ENCODE measurements at regions of chr17 and their contacts with region 1.

Region 1: DNA sequence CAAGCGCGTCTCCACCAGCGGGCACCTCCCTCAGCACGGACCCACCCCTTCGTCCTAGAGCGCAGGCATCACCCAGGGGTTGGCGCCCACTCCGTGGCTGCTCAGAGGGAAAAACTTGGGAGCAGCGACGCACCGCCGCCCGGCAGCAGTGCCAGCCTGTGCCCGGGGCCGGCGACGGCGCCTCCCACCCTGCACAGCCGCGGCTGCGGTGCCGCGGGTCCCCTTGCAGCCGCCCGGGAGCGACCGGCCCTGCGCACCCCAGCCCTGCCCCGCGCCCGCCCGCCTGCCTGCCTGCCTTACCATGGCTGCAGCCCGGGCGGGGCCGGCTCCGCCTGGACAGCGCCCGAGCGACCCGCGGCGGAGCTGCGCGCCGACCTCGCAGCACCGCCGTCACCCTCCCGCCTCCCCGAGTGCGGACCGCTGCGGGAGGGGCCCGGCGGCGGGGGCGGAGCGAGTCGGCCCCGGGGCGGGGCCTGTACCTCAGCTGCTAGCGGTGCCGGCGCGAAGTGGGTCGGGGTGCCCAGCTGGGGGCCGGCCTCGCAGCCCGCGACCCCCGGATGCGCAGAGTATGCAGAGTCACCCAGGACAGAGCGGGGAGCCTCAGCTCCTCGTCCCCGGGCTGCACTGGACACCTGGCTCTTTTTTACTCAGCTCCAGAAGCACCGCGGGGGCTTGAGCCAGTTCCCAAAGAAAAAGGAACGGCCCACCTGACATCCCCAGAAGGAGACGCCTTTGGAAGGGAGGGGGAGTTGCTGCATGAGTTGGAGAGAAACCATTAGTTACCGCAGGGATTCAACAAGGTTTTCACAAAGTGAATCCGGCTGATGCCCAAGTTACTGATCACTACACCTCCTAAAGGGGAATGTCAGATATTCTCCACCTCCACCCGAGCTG is 17.5 kb upstream of the MTMR4 start:
- DNase-seq: peak; percentile 68 to 84 (median 76)
- ATAC-seq: peak; percentile 33 to 88 (median 79)
- H3K4me3 ChIP-seq: peak overlapping the region; percentile 40 to 88 (median 64)
- H3K27ac ChIP-seq: peak overlapping the region; percentile 9 to 78 (median 68)
- H3K4me1 ChIP-seq: peaks cover 4 to 86% (median 45%) of the 10 kb centered on the region in 12 donors
- H3K27me3 ChIP-seq: peaks cover 0 to 5% (median 0%) of the 10 kb centered on the region in 9 donors
- CTCF ChIP-seq: no peak
- POLR2A ChIP-seq: peak in 1 of 2 donors; percentile 42

Region 2: GRCh38 chr17:58344047-58344790 is 187.7 kb before region 1 on chr17:
- intact Hi-C with region 1: no loop called
- DNase-seq: no peak
- ATAC-seq: peak in 3 of 4 donors; percentile 31 to 74 (median 61)
- H3K4me3 ChIP-seq: peak overlapping the region in 2 of 12 donors; percentile 10 to 45
- H3K27ac ChIP-seq: peak overlapping the region in 2 of 12 donors; percentile 2 to 100
- H3K4me1 ChIP-seq: peaks cover 0 to 88% (median 0%) of the 10 kb centered on the region in 12 donors
- H3K27me3 ChIP-seq: peaks cover 0 to 1% (median 0%) of the 10 kb centered on the region in 9 donors
- CTCF ChIP-seq: no peak
- POLR2A ChIP-seq: no peak

Region 3: DNA sequence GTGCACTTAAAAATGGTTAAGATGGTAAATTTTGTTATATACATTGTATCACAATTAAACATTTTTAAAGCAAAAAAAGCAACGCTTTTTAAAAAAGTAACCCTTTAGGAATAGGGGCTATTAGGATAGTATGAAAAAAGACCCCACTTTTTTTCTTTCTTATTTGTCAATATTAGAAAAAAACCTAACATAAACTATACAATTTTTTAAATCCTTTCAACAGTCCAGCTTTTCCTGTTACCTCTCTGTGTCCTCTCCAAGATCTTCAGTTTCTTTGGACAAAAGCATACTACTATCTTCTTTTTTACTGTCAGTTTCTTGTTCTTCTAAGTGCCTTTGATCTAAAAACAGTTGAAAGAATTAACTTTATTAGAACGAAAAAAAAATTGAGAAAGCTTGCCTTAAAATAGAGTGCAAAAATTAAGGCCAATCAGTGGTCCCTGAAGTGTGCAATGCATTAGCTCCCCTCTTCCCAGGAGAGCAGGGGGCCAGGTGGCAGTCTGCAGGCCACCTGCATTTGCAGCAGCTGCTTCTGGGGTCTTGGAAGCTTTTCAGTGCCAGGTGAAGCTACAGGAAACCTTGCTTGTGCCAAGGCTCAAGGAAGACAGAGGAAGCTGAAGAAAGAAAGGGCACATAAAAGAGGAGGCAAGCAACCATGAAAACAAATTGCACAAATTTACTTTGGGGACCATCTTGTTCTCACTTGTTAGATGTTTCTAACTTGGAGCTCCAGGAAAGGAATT is 32.9 kb after region 1 on chr17:
- intact Hi-C with region 1: no loop called
- DNase-seq: no peak
- ATAC-seq: no peak
- H3K4me3 ChIP-seq: no peak overlapping the region
- H3K27ac ChIP-seq: peak overlapping the region in 1 of 12 donors; percentile 12
- H3K4me1 ChIP-seq: peaks cover 0 to 26% (median 0%) of the 10 kb centered on the region in 12 donors
- H3K27me3 ChIP-seq: no peaks in the 10 kb centered on the region
- CTCF ChIP-seq: no peak
- POLR2A ChIP-seq: no peak

Region 4: GRCh38 chr17:58679263-58680037 is 147.5 kb after region 1 on chr17:
- intact Hi-C with region 1: loop called in 1 of 10 experiments (anchors 10 kb)
- DNase-seq: no peak
- ATAC-seq: peak in 3 of 4 donors; percentile 62 to 76 (median 75)
- H3K4me3 ChIP-seq: peak overlapping the region in 4 of 12 donors; percentile 10 to 26 (median 20)
- H3K27ac ChIP-seq: peak overlapping the region in 3 of 12 donors; percentile 4 to 49 (median 4)
- H3K4me1 ChIP-seq: no peaks in the 10 kb centered on the region
- H3K27me3 ChIP-seq: no peaks in the 10 kb centered on the region
- CTCF ChIP-seq: no peak
- POLR2A ChIP-seq: no peak